Ovary (tissue), 10 donors: ENCODE measurements at regions of chr5 and their contacts with region 1.

Region 1: GRCh38 chr5:106474066-106474465 is 1196.7 kb downstream of the EFNA5 start:
- DNase-seq: no peak
- H3K4me3 ChIP-seq: no peak overlapping the region
- H3K27ac ChIP-seq: no peak overlapping the region
- H3K4me1 ChIP-seq: no peaks in the 10 kb centered on the region
- H3K27me3 ChIP-seq: no peaks in the 10 kb centered on the region
- CTCF ChIP-seq: no peak
- EP300 ChIP-seq: no peak
- POLR2A ChIP-seq: no peak

Region 2: GRCh38 chr5:108079753-108080152 is 1605.7 kb after region 1 on chr5:
- intact Hi-C with region 1: loop called in 1 of 4 experiments (anchors 10 kb)
- DNase-seq: no peak
- H3K4me3 ChIP-seq: no peak overlapping the region
- H3K27ac ChIP-seq: no peak overlapping the region
- H3K4me1 ChIP-seq: peaks cover 1% of the 10 kb centered on the region
- H3K27me3 ChIP-seq: no peaks in the 10 kb centered on the region
- CTCF ChIP-seq: no peak
- EP300 ChIP-seq: no peak
- POLR2A ChIP-seq: no peak